ENCODE measurements at regions of chr6 and their contacts with region 1.

Region 1: GRCh38 chr6:47168183-47168582 is 126.1 kb upstream of the ADGRF1 start:
- DNase-seq: peak; percentile 99
- H3K4me3 Mint-ChIP-seq: peak overlapping the region; percentile 33
- H3K27ac Mint-ChIP-seq: peak overlapping the region; percentile 74
- H3K4me1 Mint-ChIP-seq: peaks cover 37% of the 10 kb centered on the region
- H3K27me3 Mint-ChIP-seq: no peaks in the 10 kb centered on the region
- CTCF ChIP-seq: no peak

Region 2: GRCh38 chr6:47097092-47097945 is 70.9 kb before region 1 on chr6:
- CTCF ChIA-PET with region 1: interaction called, 8 read pairs
- POLR2A ChIA-PET with region 1: interaction called, 36 read pairs
- intact Hi-C with region 1: loop called (anchors 1 kb)
- DNase-seq: peak; percentile 87
- H3K4me3 Mint-ChIP-seq: no peak overlapping the region
- H3K27ac Mint-ChIP-seq: no peak overlapping the region
- H3K4me1 Mint-ChIP-seq: peaks cover 18% of the 10 kb centered on the region
- H3K27me3 Mint-ChIP-seq: no peaks in the 10 kb centered on the region
- CTCF ChIP-seq: peak; percentile 77

Region 3: GRCh38 chr6:47134476-47135189 is 33.5 kb before region 1 on chr6:
- CTCF ChIA-PET with region 1: no interaction called
- POLR2A ChIA-PET with region 1: interaction called, 25 read pairs
- intact Hi-C with region 1: no loop called
- DNase-seq: peak; percentile 95
- H3K4me3 Mint-ChIP-seq: peak overlapping the region; percentile 35
- H3K27ac Mint-ChIP-seq: peak overlapping the region; percentile 80
- H3K4me1 Mint-ChIP-seq: peaks cover 34% of the 10 kb centered on the region
- H3K27me3 Mint-ChIP-seq: no peaks in the 10 kb centered on the region
- CTCF ChIP-seq: no peak

Region 4: GRCh38 chr6:47188588-47189021 is 20.4 kb after region 1 on chr6:
- CTCF ChIA-PET with region 1: interaction called, 3 read pairs
- POLR2A ChIA-PET with region 1: interaction called, 33 read pairs
- intact Hi-C with region 1: no loop called
- DNase-seq: peak; percentile 90
- H3K4me3 Mint-ChIP-seq: peak overlapping the region; percentile 26
- H3K27ac Mint-ChIP-seq: peak overlapping the region; percentile 61
- H3K4me1 Mint-ChIP-seq: peaks cover 15% of the 10 kb centered on the region
- H3K27me3 Mint-ChIP-seq: no peaks in the 10 kb centered on the region
- CTCF ChIP-seq: no peak

Region 5: GRCh38 chr6:47242483-47243386 is 74.6 kb after region 1 on chr6:
- CTCF ChIA-PET with region 1: interaction called, 5 read pairs
- POLR2A ChIA-PET with region 1: interaction called, 29 read pairs
- intact Hi-C with region 1: no loop called
- DNase-seq: peak; percentile 94
- H3K4me3 Mint-ChIP-seq: peak overlapping the region; percentile 65
- H3K27ac Mint-ChIP-seq: peak overlapping the region; percentile 77
- H3K4me1 Mint-ChIP-seq: peaks cover 36% of the 10 kb centered on the region
- H3K27me3 Mint-ChIP-seq: no peaks in the 10 kb centered on the region
- CTCF ChIP-seq: no peak

Measured in MCF 10A (cell line).